ENCODE measurements at regions of chr9 and their contacts with region 1.

Region 1: DNA sequence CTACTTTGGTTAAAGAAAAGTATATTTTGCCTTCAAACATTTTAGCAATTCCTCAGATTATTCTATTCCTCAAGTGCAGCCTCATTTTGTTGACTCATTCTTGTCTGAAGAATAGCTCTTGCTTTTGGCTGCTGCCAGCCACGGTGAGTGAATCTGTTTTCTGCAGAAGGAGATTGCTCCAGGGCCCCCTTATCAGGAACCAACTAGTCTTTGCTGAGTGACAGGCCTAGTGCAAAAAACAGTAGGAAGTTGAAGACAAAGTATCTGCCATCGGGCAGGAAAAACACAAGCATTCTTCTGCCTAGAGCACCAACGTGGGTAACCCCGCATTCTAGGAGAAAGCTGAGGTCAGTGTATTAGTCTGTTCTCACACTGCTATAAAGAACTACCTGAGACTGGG is 42.3 kb downstream of the ZNF883 start:
- DNase-seq: no peak
- H3K4me3 ChIP-seq: no peak overlapping the region
- H3K27ac ChIP-seq: no peak overlapping the region
- H3K4me1 ChIP-seq: no peaks in the 10 kb centered on the region
- H3K27me3 ChIP-seq: peaks cover 0 to 8% (median 0%) of the 10 kb centered on the region in 3 donors
- CTCF ChIP-seq: no peak
- EP300 ChIP-seq: no peak
- POLR2A ChIP-seq: no peak

Region 2: DNA sequence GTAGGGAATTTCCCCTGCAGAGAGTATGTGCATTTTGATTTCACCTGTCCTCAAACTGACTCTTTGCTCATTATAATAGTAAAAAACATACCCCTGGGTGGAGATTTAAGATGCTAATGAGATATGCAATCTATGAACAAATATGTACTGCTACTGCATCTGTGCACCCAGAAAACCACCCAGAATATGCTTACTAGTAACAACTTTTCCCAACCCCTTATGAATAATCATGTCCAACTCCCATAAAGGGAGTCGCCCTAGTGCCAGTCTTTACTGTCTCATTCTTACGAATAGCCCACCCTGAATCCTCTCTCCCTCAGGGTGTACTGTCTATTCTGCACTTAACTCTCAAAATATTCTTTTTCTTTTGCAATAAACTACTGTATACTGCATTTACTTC is 125.8 kb after region 1 on chr9:
- intact Hi-C with region 1: loop called (anchors 10 kb)
- DNase-seq: no peak
- H3K4me3 ChIP-seq: no peak overlapping the region
- H3K27ac ChIP-seq: no peak overlapping the region
- H3K4me1 ChIP-seq: no peaks in the 10 kb centered on the region
- H3K27me3 ChIP-seq: peaks cover 0 to 97% (median 5%) of the 10 kb centered on the region in 3 donors
- CTCF ChIP-seq: no peak
- EP300 ChIP-seq: no peak
- POLR2A ChIP-seq: no peak

Measured in stomach (tissue), 19 donors.